Breast epithelium (tissue), 4 donors: ENCODE measurements at regions of chr11 and their contacts with region 1.

Region 1: DNA sequence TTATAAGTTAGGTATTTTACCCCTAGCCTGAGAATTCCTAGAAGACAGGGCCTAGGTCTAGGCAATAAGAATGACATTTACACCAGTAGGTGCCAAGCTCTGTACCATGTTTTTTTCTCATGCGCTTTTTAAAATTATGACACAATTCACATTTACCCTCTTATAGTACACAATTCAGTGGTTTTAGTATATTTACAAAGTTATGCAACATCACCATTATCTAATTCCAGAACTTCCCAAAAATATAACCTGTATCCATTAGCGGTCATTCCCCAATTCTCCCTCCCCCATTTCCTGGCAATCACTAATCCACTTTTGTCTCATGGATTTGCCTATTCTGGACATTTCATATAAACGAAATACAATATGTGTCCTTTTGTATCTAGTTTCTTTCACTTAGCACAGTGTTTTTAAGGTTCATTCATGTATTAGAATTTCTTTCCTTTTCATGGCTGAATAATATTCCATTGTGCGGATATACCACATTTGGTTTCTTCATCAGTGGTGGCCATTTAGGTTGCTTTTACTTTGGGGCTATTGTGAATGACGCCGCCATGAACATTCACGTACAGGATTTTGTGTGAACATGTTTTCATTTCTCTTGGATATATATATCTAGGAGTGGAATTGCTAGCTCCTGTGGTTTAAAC is 92.4 kb downstream of the MICAL2 start:
- DNase-seq: no peak
- H3K4me3 ChIP-seq: no peak overlapping the region
- H3K27ac ChIP-seq: no peak overlapping the region
- H3K4me1 ChIP-seq: peaks cover 0 to 6% of the 10 kb centered on the region in 2 donors
- H3K27me3 ChIP-seq: no peaks in the 10 kb centered on the region
- CTCF ChIP-seq: no peak
- POLR2A ChIP-seq: no peak

Region 2: DNA sequence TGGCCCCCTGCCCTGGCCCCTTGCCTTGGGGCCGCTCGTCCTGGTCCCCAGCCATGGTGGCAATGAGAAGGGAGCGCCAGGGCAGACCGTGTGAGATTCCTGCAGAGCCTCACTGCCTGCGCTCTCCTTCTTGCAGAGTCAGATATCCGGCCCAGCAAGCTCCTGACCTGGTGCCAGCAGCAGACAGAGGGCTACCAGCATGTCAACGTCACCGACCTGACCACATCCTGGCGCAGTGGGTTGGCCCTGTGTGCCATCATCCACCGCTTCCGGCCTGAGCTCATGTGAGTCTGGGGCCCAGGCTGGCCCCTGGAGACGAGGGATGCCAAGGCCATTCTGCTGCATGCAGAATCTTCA is 21.7 kb after region 1 on chr11:
- intact Hi-C with region 1: loop called (anchors 1 kb)
- DNase-seq: peak in 1 of 2 donors; percentile 89
- H3K4me3 ChIP-seq: peak overlapping the region in 1 of 3 donors; percentile 23
- H3K27ac ChIP-seq: peak overlapping the region; percentile 68 to 85
- H3K4me1 ChIP-seq: peaks cover 0 to 13% of the 10 kb centered on the region in 2 donors
- H3K27me3 ChIP-seq: no peaks in the 10 kb centered on the region
- CTCF ChIP-seq: no peak
- POLR2A ChIP-seq: no peak

Region 3: DNA sequence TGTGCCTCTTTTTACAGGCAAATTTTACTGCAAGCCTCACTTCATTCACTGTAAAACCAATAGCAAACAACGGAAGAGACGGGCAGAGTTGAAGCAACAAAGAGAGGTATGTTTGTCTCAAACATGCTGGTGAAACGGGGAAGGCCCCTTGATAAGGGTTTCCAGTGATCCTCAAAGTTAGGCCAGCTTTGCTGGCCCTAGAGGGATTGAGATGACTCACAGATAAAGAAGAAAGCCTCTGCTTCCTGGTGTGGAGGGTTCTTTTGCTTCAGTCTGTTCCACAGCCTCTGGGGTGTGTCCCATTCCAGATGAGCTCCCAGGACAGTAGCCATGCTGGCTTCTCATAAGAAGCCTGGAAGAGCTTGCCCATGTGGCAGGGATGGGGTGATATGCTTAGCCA is 55.7 kb after region 1 on chr11:
- intact Hi-C with region 1: no loop called
- DNase-seq: no peak
- H3K4me3 ChIP-seq: no peak overlapping the region
- H3K27ac ChIP-seq: no peak overlapping the region
- H3K4me1 ChIP-seq: no peaks in the 10 kb centered on the region
- H3K27me3 ChIP-seq: no peaks in the 10 kb centered on the region
- CTCF ChIP-seq: no peak
- POLR2A ChIP-seq: no peak